Calu3 (cell line): ENCODE measurements at regions of chr1 and their contacts with region 1.

Region 1: DNA sequence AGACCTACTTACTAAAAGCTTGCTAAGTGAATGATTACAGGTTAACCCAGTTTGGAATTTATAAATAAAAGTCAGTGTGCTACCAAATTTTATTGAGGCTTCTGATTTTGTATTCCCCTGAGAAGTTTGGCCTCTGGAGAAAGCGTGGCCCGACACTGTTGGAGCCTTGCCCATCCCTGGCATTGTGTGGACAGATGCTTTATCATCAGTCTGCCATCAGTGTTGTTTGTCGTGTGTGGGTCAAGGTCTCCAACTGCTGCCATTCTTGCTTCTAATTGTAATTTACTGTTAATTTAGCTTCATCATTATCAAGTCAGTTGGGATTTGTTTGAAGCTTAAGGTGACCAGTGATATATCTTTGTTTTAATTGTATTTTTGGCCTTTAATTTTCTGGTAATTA is 62.0 kb upstream of the LPGAT1 start:
- DNase-seq: no peak
- H3K4me3 Mint-ChIP-seq: no peak overlapping the region
- H3K27ac Mint-ChIP-seq: no peak overlapping the region
- H3K4me1 Mint-ChIP-seq: peaks cover 32% of the 10 kb centered on the region
- H3K27me3 Mint-ChIP-seq: no peaks in the 10 kb centered on the region
- CTCF ChIP-seq: no peak

Region 2: GRCh38 chr1:211614615-211615014 is 278.0 kb before region 1 on chr1:
- CTCF ChIA-PET with region 1: interaction called, 10 read pairs
- intact Hi-C with region 1: no loop called
- DNase-seq: no peak
- H3K4me3 Mint-ChIP-seq: no peak overlapping the region
- H3K27ac Mint-ChIP-seq: no peak overlapping the region
- H3K4me1 Mint-ChIP-seq: peaks cover 17% of the 10 kb centered on the region
- H3K27me3 Mint-ChIP-seq: no peaks in the 10 kb centered on the region
- CTCF ChIP-seq: no peak

Region 3: GRCh38 chr1:211735208-211736170 is 157.1 kb before region 1 on chr1:
- CTCF ChIA-PET with region 1: interaction called, 10 read pairs
- intact Hi-C with region 1: no loop called
- DNase-seq: peak; percentile 90
- H3K4me3 Mint-ChIP-seq: peak overlapping the region; percentile 41
- H3K27ac Mint-ChIP-seq: peak overlapping the region; percentile 81
- H3K4me1 Mint-ChIP-seq: peaks cover 63% of the 10 kb centered on the region
- H3K27me3 Mint-ChIP-seq: no peaks in the 10 kb centered on the region
- CTCF ChIP-seq: no peak

Region 4: DNA sequence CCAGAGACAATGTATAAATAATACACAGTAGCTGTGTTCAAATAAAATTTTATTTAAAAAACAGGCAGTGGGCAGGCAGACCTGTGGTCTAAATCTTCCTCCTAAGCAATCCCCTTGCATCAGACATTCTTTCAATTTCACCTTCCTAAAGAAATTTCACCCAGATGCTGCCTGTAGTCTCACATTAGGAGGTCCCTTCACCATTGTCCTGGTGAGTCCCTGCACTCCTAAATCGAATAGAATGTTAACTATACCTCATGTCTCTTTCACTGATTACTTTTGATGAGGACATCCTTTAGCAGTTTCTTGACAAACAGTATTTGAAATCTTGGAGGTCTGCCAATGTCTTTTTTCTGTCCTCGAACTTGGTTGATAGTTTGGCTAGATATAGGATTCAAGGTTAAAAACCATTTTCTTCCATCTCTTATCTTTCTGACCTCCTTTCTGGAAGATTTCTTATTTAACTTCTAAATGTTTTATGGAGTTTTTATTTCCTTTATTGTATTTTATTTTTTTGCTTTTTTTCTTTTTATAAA is 139.6 kb before region 1 on chr1:
- CTCF ChIA-PET with region 1: no interaction called
- intact Hi-C with region 1: no loop called
- DNase-seq: no peak
- H3K4me3 Mint-ChIP-seq: no peak overlapping the region
- H3K27ac Mint-ChIP-seq: no peak overlapping the region
- H3K4me1 Mint-ChIP-seq: no peaks in the 10 kb centered on the region
- H3K27me3 Mint-ChIP-seq: no peaks in the 10 kb centered on the region
- CTCF ChIP-seq: no peak

Region 5: GRCh38 chr1:211800925-211801607 is 91.5 kb before region 1 on chr1:
- CTCF ChIA-PET with region 1: interaction called, 14 read pairs
- intact Hi-C with region 1: no loop called
- DNase-seq: no peak
- H3K4me3 Mint-ChIP-seq: no peak overlapping the region
- H3K27ac Mint-ChIP-seq: no peak overlapping the region
- H3K4me1 Mint-ChIP-seq: peaks cover 8% of the 10 kb centered on the region
- H3K27me3 Mint-ChIP-seq: no peaks in the 10 kb centered on the region
- CTCF ChIP-seq: no peak

Region 6: DNA sequence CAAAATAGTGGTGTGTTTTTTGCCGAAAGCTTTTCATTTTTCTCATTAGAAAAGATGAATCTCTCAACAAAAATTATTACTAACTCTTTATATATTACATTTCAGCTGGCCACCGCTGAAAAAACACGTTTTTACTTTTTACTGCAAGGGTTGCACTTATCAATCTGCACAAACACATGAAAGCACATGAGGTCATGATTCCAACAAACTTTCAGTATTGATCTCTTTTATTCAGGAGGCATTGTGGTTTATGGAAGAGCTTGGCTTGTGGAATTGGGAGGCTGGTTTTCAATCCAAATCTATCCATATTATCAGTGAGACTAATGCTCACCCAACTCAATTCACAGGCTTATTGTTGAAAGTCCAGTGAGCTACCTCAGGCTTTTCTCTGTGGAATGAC is 41.4 kb before region 1 on chr1:
- CTCF ChIA-PET with region 1: no interaction called
- intact Hi-C with region 1: no loop called
- DNase-seq: no peak
- H3K4me3 Mint-ChIP-seq: no peak overlapping the region
- H3K27ac Mint-ChIP-seq: no peak overlapping the region
- H3K4me1 Mint-ChIP-seq: no peaks in the 10 kb centered on the region
- H3K27me3 Mint-ChIP-seq: no peaks in the 10 kb centered on the region
- CTCF ChIP-seq: no peak